ENCODE measurements at regions of chr1 and their contacts with region 1.

Region 1: GRCh38 chr1:35394386-35394785 is 125.9 kb downstream of the ZMYM4 start:
- DNase-seq: no peak
- H3K27ac ChIP-seq: no peak overlapping the region
- CTCF ChIP-seq: no peak

Region 2: DNA sequence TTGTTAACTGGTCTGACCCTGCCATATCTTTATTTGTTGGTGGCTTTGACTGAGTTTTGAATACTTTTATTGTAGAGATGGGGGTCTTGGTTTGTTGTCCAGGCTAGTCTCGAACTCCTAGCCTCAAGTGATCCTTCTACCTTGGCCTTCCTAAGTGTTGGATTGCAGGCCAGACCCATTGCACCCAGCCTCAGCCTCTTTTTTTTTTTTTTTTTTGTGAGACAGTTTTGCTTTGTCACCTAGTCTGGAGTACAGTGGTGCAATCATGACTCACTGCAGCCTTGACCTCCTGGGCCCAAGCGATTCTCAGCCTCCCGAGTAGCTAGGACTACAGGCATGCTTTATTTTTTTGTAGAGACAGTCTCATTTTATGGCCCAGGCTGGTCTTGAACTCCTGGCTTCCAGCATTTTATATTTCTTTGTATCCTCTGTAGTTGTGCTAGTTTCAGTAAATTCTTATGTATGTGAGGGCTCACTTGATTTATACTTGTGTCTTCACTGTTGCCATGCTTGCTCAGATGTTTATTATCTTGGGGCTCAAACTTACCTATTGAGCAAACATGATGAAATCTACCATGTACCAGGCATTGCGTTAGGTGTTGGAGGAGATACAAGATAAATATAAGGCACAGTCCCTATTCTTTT is 854.0 kb after region 1 on chr1:
- CTCF ChIA-PET with region 1: interaction called, 10 read pairs
- POLR2A ChIA-PET with region 1: no interaction called
- DNase-seq: peak; percentile 13
- H3K27ac ChIP-seq: peak overlapping the region; percentile 87
- CTCF ChIP-seq: no peak